Colonic mucosa (tissue), 4 donors: ENCODE measurements at regions of chr5 and their contacts with region 1.

Region 1: DNA sequence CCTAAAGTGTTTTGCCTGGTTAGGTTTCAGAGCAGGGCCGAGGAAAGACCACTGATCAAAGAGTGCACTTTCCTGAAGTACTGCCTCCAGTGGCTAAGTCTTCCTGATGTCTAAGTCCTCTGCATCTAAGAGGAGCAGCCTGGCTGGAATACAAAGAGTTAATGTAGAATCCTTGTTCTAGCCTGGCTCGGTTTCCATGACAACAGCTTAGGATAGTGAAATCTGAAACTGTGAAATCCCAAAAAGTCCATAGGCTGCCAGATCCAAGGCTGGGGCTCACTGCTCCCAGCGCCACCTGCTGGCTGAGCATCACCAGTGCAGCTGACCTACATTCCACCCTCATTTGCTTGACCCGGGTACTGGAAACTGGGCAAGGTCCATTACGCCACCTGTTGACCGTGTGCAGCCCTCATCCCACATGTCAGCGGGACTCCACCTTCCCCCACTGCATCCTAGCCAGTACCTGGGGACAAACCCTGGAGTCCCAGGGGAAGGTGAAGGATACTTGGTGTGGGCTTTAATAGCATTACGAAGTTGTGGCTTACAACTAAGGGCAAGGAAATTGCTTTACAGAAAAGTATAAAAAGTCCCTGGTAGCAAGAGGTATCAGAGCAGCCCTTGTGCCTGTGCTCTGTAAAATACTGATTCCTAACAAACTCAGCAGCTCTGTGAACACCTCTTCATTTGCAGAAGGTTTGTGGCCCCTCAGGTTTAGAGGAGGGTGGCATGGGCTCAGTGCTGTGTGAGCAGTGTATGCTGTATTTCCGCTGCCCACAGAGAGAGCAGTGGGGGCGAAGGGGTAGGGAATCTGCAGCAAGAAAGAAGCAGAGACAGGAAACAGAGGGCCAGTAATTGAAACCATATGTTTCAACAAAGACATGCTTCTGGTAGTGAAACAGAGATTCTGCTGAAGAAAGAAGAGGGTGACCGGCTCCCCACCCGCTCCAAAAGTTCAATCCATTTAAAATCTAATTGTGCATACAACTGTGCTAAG is 36.0 kb downstream of the PCDHGC5 start:
- DNase-seq: peak; percentile 88
- H3K4me3 ChIP-seq: no peak overlapping the region
- H3K27ac ChIP-seq: peak overlapping the region; percentile 43
- H3K4me1 ChIP-seq: peaks cover 11% of the 10 kb centered on the region
- H3K27me3 ChIP-seq: no peaks in the 10 kb centered on the region
- CTCF ChIP-seq: peak; percentile 98

Region 2: GRCh38 chr5:140926443-140927227 is 598.3 kb before region 1 on chr5:
- intact Hi-C with region 1: no loop called
- DNase-seq: peak; percentile 42
- H3K4me3 ChIP-seq: peak overlapping the region; percentile 30
- H3K27ac ChIP-seq: no peak overlapping the region
- H3K4me1 ChIP-seq: no peaks in the 10 kb centered on the region
- H3K27me3 ChIP-seq: no peaks in the 10 kb centered on the region
- CTCF ChIP-seq: peak; percentile 42

Region 3: DNA sequence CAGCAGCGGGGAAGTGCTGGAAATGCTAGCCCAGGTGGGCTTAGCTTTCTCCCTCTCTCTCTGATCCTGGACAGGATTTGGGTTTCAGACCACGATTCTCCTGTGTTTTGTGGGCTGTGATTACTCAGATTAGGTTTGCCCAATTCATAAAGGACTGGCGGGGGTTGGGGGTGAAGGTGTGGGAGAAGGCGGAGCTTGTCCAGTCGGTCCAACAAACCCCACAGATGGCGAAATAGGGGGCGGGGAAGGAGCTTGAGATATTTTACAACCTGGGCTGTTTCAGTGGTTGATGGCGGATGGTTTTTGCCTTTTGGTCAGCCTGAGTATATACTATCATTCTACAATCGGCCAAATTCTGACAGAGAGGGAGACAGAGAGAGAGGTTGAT is 523.4 kb before region 1 on chr5:
- intact Hi-C with region 1: no loop called
- DNase-seq: no peak
- H3K4me3 ChIP-seq: peak overlapping the region; percentile 7
- H3K27ac ChIP-seq: no peak overlapping the region
- H3K4me1 ChIP-seq: no peaks in the 10 kb centered on the region
- H3K27me3 ChIP-seq: no peaks in the 10 kb centered on the region
- CTCF ChIP-seq: no peak

Region 4: DNA sequence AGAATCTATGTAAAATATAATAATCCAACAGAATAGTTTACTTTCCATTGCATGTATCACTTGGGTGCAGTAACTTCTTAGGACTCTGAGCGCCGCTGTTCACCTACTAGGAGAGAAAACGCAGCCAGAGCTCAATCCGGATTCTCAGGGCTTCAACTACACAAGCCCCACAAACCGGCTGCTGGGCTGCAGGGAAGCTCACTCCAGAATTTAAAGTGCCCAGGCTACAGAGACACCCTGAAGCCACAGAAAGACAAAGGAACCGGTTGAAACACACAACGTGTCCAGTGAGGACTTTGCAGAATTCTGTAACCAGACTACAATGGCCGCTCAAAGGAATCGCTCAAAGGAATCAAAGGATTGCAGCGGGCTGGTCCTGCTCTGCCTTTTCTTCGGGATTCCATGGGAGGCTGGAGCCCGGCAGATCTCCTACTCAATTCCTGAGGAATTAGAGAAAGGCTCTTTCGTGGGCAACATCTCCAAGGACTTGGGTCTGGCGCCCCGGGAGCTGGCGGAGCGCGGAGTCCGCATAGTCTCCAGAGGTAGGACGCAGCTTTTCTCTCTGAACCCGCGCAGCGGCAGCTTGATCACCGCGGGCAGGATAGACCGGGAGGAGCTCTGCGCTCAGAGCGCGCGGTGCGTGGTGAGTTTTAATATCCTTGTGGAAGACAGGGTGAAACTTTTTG is 111.9 kb before region 1 on chr5 and contains the start of gene PCDHGA10:
- intact Hi-C with region 1: loop called (anchors 10 kb)
- DNase-seq: peak; percentile 67
- H3K4me3 ChIP-seq: peak within 1 kb of the TSS; percentile 28
- H3K27ac ChIP-seq: no peak within 1 kb of the TSS
- H3K4me1 ChIP-seq: no peaks in the 10 kb centered on the region
- H3K27me3 ChIP-seq: no peaks in the 10 kb centered on the region
- CTCF ChIP-seq: peak; percentile 26
- total RNA-seq, gene PCDHGA10: 2.7 to 4.7 TPM